MCF 10A (cell line): ENCODE measurements at regions of chr7 and their contacts with region 1.

Region 1: GRCh38 chr7:134448700-134449229 is 10.1 kb downstream of the AKR1B1 start:
- DNase-seq: peak; percentile 83
- H3K4me3 Mint-ChIP-seq: no peak overlapping the region
- H3K27ac Mint-ChIP-seq: peak overlapping the region; percentile 89
- H3K4me1 Mint-ChIP-seq: peaks cover 25% of the 10 kb centered on the region
- H3K27me3 Mint-ChIP-seq: no peaks in the 10 kb centered on the region
- CTCF ChIP-seq: no peak

Region 2: GRCh38 chr7:134458806-134459698 is 10.3 kb after region 1 on chr7 and contains the start of gene AKR1B1:
- CTCF ChIA-PET with region 1: interaction called, 37 read pairs
- POLR2A ChIA-PET with region 1: interaction called, 46 read pairs
- intact Hi-C with region 1: no loop called
- DNase-seq: peak; percentile 86
- H3K4me3 Mint-ChIP-seq: peak within 1 kb of the TSS; percentile 76
- H3K27ac Mint-ChIP-seq: peak within 1 kb of the TSS; percentile 61
- H3K4me1 Mint-ChIP-seq: peaks cover 29% of the 10 kb centered on the region
- H3K27me3 Mint-ChIP-seq: no peaks in the 10 kb centered on the region
- CTCF ChIP-seq: peak; percentile 18
- total RNA-seq, gene AKR1B1: 115 and 128 TPM in 2 replicates

Region 3: GRCh38 chr7:134480736-134481135 is 32.0 kb after region 1 on chr7:
- CTCF ChIA-PET with region 1: interaction called, 17 read pairs
- POLR2A ChIA-PET with region 1: interaction called, 6 read pairs
- intact Hi-C with region 1: loop called (anchors 1 kb)
- DNase-seq: peak; percentile 67
- H3K4me3 Mint-ChIP-seq: no peak overlapping the region
- H3K27ac Mint-ChIP-seq: no peak overlapping the region
- H3K4me1 Mint-ChIP-seq: peaks cover 15% of the 10 kb centered on the region
- H3K27me3 Mint-ChIP-seq: no peaks in the 10 kb centered on the region
- CTCF ChIP-seq: no peak